ENCODE measurements at regions of chr12 and their contacts with region 1.

Region 1: DNA sequence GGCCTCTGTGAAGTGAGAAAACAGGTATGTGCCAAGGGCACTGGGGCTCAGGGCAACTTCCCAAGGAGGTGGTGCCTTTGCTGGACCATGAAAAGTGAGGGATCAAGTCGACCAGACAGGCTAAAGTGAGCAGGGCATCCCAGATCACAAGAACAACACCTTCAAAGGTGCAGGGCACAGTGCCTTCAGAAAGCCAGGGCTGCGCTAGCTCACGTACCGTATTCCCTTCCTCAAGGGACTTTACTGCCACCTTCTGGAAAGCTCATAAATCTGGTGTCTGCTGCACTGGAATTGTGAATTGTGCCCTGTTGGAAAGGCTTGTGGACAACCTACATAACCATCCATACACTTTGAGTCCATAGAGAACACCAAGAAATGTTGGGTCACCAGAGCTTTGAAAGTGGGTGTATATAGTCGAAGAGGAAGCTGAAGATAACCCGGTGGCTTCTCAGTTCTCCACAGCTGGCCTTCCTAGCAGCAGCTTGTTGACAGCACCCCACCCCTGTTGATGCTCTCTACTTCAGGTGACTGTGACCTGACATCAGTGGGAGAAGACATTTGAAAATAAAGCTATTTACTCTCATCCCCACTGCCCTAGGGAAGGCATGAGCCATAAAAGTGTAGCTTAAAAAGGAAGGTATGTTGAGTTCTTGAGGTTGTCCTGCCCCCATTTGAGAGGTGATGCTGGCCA is 24.5 kb downstream of the FIGNL2 start:
- DNase-seq: peak; percentile 70 to 85
- ATAC-seq: peak; percentile 30 to 67; a peak in 3 of 6 replicates
- H3K4me3 ChIP-seq: no peak overlapping the region
- H3K27ac ChIP-seq: no peak overlapping the region
- H3K4me1 ChIP-seq: peaks cover 24% of the 10 kb centered on the region
- CTCF ChIP-seq: peak; percentile 73
- EP300 ChIP-seq: no peak
- POLR2A ChIP-seq: no peak
- RAD21 ChIP-seq: peak; percentile 71 to 85

Region 2: GRCh38 chr12:51430231-51430906 is 393.7 kb before region 1 on chr12:
- CTCF ChIA-PET with region 1: interaction called, 17 read pairs
- POLR2A ChIA-PET with region 1: no interaction called
- DNase-seq: peak in 1 of 2 experiments; percentile 36
- ATAC-seq: peak in 1 of 2 experiments; percentile 41; a peak in 3 of 6 replicates
- H3K4me3 ChIP-seq: no peak overlapping the region
- H3K27ac ChIP-seq: no peak overlapping the region
- H3K4me1 ChIP-seq: 0 out of 3 replicates have a peak, but pooled peaks cover 7% of the 10 kb centered on the region
- CTCF ChIP-seq: no peak
- EP300 ChIP-seq: no peak
- POLR2A ChIP-seq: no peak
- RAD21 ChIP-seq: no peak

Region 3: DNA sequence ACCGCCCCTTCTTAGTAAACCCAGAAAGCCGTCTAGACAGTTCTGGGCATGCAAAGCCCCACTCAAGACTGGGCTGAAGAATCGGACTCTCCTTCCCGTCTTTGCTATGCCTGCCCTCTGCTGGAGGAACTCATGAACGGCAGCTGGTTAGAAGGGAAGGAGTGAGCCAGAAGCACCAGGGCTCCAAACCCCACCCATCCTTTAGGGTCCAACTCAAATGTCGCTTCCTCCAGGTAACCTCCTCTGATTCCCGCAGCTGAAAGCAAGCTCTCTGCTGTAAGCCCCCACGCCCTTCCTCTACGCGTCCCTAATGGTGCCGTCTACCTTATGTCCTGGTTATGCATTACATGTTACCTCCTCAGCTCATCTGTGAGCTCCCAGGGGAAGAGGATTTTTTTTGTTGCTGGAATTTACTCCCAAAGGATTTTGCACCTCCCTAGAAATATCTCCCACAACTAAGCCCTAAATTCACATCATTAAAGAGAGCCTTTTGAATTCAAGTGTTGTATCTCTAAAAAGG is 292.0 kb before region 1 on chr12:
- CTCF ChIA-PET with region 1: interaction called, 20 read pairs
- POLR2A ChIA-PET with region 1: interaction called, 6 read pairs
- DNase-seq: peak; percentile 76 to 79
- ATAC-seq: peak; percentile 83 to 94
- H3K4me3 ChIP-seq: no peak overlapping the region
- H3K27ac ChIP-seq: peak overlapping the region in 1 of 2 experiments; percentile 52; a peak in 1 of 6 replicates
- H3K4me1 ChIP-seq: peaks cover 19% of the 10 kb centered on the region; the same call in 2 of the 3 replicates
- CTCF ChIP-seq: peak; percentile 89
- EP300 ChIP-seq: no peak
- POLR2A ChIP-seq: no peak
- RAD21 ChIP-seq: peak; percentile 84 to 89

Region 4: DNA sequence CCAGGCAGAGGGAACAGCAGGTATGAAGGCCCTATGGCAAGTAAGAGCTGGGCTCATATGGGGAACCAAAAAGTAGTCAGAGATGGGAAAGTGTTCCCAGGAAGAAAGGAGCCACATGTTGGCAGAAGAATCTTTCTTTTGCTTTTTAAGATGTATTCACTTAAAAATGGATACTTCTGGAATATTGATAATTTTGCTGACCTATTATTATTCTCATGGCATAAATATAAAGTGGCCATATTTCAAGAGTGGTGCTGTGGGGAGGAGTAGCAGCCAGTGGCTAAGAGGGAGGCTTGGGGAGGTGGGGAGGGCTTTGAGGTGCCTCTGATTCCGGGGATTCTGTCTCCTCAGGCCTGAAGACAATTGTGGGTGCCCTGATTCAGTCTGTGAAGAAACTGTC is 124.8 kb before region 1 on chr12:
- CTCF ChIA-PET with region 1: no interaction called
- POLR2A ChIA-PET with region 1: no interaction called
- DNase-seq: no peak
- ATAC-seq: no peak
- H3K4me3 ChIP-seq: no peak overlapping the region
- H3K27ac ChIP-seq: no peak overlapping the region
- H3K4me1 ChIP-seq: no peaks in the 10 kb centered on the region
- CTCF ChIP-seq: no peak
- EP300 ChIP-seq: no peak
- POLR2A ChIP-seq: no peak
- RAD21 ChIP-seq: no peak

Region 5: GRCh38 chr12:51798501-51798900 is 25.5 kb before region 1 on chr12:
- CTCF ChIA-PET with region 1: interaction called, 14 read pairs
- POLR2A ChIA-PET with region 1: no interaction called
- DNase-seq: no peak
- ATAC-seq: no peak
- H3K4me3 ChIP-seq: no peak overlapping the region
- H3K27ac ChIP-seq: no peak overlapping the region
- H3K4me1 ChIP-seq: no peaks in the 10 kb centered on the region
- CTCF ChIP-seq: no peak
- EP300 ChIP-seq: no peak
- POLR2A ChIP-seq: no peak
- RAD21 ChIP-seq: no peak

Region 6: DNA sequence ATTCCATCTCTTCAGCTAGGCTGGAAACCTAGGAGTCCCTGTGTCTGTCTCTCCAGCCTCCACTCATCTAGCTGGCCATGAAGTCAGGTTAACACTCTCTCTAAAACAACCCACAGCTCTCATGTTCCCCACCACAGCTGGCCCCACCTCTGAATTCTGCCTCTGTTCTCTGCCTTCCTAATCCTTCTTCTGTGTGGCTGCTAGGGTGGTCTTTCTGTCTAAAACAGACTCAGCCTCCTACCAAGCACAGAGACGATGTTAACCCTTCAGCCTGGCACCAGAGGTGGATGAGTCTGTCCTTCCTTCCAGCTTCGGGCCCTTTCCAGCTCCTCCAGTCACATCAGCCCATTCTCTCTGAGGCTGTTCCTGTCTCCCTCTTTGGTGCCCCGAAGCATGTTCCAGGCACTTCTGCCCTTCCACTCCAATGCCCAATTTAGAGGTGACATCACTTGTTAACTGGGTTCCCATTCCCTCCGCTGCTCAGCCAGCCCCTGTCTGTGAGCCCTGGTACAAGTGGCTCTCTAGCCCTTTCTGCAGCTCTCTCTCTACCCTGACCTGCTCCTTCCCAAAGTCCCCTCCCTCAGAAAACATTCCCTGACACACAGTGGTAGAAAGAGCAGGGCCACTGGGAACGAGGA is 15.4 kb after region 1 on chr12:
- CTCF ChIA-PET with region 1: interaction called, 18 read pairs
- POLR2A ChIA-PET with region 1: interaction called, 9 read pairs
- DNase-seq: no peak
- ATAC-seq: peak; percentile 29 to 30; a peak in 4 of 6 replicates
- H3K4me3 ChIP-seq: no peak overlapping the region
- H3K27ac ChIP-seq: no peak overlapping the region
- H3K4me1 ChIP-seq: no peaks in the 10 kb centered on the region
- CTCF ChIP-seq: no peak
- EP300 ChIP-seq: no peak
- POLR2A ChIP-seq: no peak
- RAD21 ChIP-seq: no peak

Region 7: DNA sequence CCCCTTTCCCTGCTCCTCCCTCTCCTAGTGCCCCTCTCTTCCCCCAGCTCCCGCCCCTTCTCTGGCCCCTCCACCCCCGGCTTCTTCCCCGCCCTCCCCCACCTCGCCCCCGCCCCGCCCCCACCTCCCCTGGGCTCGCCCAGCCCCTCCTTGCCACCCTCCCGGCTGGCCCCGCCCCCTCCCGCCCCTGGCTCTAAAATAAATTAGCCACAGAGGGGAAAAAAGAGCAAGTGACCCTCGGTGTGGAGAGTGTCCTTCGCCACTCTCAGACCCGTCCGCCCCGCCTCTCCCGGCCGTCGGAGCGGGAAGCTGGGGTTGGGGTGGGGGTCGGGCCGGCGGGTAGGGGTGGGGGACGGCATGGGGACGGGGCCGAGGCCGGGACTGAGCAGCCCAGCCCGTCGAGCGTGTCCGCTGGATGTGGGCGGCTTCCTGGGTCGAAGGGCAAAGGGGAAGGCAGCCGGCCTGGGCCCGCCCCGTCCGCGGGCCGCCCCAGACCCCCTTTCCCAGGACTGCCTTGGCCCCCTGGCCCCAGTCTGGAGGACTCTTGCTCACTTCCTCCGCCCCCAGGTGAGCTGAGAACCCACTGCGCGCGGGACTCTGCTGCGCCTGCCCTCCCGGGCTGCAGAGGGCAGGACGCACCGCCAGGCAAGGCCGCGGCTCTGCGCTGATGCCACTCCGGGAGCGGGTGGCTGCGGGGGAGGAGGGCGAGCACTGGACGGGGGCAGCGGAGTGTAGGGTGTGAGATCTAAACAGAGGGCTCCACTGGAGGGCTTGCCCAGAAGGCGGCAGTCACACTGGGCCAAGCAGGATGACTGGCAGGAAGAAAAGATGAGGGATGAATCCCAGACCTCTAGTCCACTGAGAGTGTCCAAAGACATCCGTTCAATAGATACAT is 25.1 kb after region 1 on chr12:
- CTCF ChIA-PET with region 1: interaction called, 12 read pairs
- POLR2A ChIA-PET with region 1: interaction called, 4 read pairs
- DNase-seq: no peak
- ATAC-seq: no peak
- H3K4me3 ChIP-seq: peak overlapping the region; percentile 76; the same call in 2 of the 3 replicates
- H3K27ac ChIP-seq: peak overlapping the region in 1 of 2 experiments; percentile 74; a peak in 3 of 6 replicates
- H3K4me1 ChIP-seq: peaks cover 5% of the 10 kb centered on the region; the same call in 1 of the 3 replicates
- CTCF ChIP-seq: no peak
- EP300 ChIP-seq: no peak
- POLR2A ChIP-seq: no peak
- RAD21 ChIP-seq: no peak

Region 8: DNA sequence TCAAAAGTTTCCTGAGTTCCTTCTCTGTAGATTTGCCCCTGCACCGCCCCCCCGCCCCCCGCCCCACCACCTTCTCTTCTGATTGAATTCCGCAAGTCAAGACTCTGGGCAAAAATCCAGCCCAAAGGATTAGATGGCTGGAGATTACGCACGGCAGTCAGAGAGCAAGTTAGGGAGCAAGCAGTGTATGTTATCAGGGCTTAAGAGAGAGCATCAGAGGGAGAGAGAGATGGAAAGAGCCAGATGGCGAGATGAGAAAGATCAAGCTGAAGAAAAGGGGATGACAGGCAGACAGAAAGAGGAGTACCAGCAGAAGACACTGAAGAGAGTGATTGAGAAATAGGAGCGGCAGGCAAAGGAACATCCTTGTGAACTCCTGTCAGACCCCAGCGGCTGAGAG is 50.0 kb after region 1 on chr12:
- CTCF ChIA-PET with region 1: interaction called, 18 read pairs
- POLR2A ChIA-PET with region 1: interaction called, 5 read pairs
- DNase-seq: no peak
- ATAC-seq: no peak
- H3K4me3 ChIP-seq: no peak overlapping the region
- H3K27ac ChIP-seq: no peak overlapping the region
- H3K4me1 ChIP-seq: no peaks in the 10 kb centered on the region
- CTCF ChIP-seq: no peak
- EP300 ChIP-seq: no peak
- POLR2A ChIP-seq: no peak
- RAD21 ChIP-seq: no peak

Region 9: DNA sequence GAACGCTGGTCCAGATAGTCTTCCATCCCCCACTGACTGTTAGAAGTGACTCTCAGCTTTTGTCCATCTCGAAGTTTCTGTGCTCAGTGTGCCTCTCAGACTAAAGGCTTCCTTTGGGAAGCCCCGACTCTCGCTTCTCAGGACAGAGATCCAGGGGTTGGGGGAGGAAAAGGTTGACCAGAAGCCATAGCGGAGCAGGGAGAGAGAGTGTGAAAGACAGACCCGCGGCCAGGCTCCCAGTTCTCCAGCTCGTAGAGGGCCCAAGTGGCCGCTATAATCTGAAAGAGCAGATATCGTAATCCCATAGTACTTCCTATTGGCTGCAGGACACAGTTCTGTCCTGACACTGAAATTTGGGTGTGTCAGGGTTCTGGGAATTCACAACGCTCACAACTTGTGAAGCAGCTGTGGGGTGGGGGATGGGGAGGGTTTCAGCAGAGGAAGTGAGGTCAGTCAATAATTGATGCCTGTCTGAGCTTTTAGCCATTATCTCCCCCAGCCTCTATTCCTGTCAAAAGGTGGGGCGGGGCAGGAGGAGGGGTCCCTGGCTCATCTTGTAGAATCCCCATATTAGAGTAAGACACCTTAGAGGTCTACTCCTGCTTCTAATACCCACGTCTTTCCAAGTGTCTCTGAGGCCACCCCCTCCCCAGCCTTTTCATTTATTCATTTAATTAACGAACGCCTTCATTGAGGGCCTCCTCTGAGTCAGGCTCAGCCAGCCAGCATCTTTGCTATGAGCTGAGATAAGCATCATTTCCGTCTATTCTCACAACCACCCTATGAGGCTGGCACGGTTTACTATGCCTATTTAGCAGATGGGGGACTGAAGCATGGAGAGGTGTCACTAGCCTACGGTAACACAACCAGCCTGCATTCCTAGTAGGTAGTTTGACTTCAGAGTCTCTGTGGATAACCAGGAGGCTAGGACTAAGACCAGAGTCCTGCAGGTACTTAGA is 81.7 kb after region 1 on chr12:
- CTCF ChIA-PET with region 1: no interaction called
- POLR2A ChIA-PET with region 1: no interaction called
- DNase-seq: no peak
- ATAC-seq: peak in 1 of 2 experiments; percentile 9; a peak in 2 of 6 replicates
- H3K4me3 ChIP-seq: no peak overlapping the region
- H3K27ac ChIP-seq: no peak overlapping the region
- H3K4me1 ChIP-seq: no peaks in the 10 kb centered on the region
- CTCF ChIP-seq: no peak
- EP300 ChIP-seq: no peak
- POLR2A ChIP-seq: no peak
- RAD21 ChIP-seq: no peak

Region 10: GRCh38 chr12:52156736-52157565 is 332.9 kb after region 1 on chr12:
- CTCF ChIA-PET with region 1: no interaction called
- POLR2A ChIA-PET with region 1: no interaction called
- DNase-seq: peak; percentile 81 to 88
- ATAC-seq: peak; percentile 72 to 78
- H3K4me3 ChIP-seq: no peak overlapping the region
- H3K27ac ChIP-seq: peak overlapping the region; percentile 100
- H3K4me1 ChIP-seq: peaks cover 63% of the 10 kb centered on the region
- CTCF ChIP-seq: peak; percentile 97
- EP300 ChIP-seq: no peak
- POLR2A ChIP-seq: no peak
- RAD21 ChIP-seq: peak; percentile 99 to 100

Measured in A549 (cell line).